Psoas muscle (tissue), 8 donors: ENCODE measurements at regions of chr9 and their contacts with region 1.

Region 1: GRCh38 chr9:17757816-17758215 is 178.9 kb downstream of the SH3GL2 start:
- DNase-seq: no peak
- ATAC-seq: no peak
- H3K4me3 ChIP-seq: no peak overlapping the region
- H3K27ac ChIP-seq: no peak overlapping the region
- H3K4me1 ChIP-seq: no peaks in the 10 kb centered on the region
- H3K27me3 ChIP-seq: no peaks in the 10 kb centered on the region
- CTCF ChIP-seq: no peak

Region 2: DNA sequence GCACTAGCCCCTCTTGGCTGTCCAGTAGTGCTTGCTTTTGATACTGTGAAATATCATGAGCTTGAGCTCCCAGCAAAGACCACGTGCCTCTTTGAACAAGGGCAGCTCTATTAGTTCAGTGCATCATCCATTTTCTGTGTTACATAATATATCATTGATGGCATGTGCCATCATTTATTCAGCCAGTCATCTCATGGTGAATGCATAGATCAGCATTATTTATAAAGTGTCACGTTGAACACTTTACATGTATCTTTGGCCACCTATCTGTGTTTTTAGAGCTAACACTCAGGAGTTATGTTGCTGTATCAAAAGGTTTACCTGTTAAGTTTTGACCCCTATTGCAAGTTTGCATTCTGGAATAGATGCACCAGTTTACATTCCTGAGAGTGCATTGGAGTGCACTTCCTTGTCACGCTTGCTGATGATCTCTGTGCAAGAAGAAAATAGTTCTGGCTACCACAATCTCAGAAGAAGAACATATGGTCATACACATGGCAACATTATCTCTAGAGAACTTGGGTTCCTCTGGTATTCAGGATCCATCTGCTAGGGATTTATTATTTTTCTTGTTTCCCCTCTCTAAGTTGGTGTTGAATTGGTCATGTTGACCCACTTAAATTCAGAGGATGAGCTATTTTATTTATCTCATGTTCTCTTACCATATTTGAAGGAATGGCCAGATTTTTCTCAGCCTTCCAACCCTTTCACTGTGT is 58.0 kb before region 1 on chr9:
- intact Hi-C with region 1: loop called in 1 of 2 experiments (anchors 10 kb)
- DNase-seq: no peak
- ATAC-seq: no peak
- H3K4me3 ChIP-seq: no peak overlapping the region
- H3K27ac ChIP-seq: no peak overlapping the region
- H3K4me1 ChIP-seq: no peaks in the 10 kb centered on the region
- H3K27me3 ChIP-seq: no peaks in the 10 kb centered on the region
- CTCF ChIP-seq: no peak

Region 3: GRCh38 chr9:17793713-17794622 is 36.2 kb after region 1 on chr9:
- intact Hi-C with region 1: no loop called
- DNase-seq: no peak
- ATAC-seq: no peak
- H3K4me3 ChIP-seq: no peak overlapping the region
- H3K27ac ChIP-seq: no peak overlapping the region
- H3K4me1 ChIP-seq: no peaks in the 10 kb centered on the region
- H3K27me3 ChIP-seq: no peaks in the 10 kb centered on the region
- CTCF ChIP-seq: no peak